Ascending aorta (tissue), 2 donors: ENCODE measurements at regions of chr9 and their contacts with region 1.

Region 1: DNA sequence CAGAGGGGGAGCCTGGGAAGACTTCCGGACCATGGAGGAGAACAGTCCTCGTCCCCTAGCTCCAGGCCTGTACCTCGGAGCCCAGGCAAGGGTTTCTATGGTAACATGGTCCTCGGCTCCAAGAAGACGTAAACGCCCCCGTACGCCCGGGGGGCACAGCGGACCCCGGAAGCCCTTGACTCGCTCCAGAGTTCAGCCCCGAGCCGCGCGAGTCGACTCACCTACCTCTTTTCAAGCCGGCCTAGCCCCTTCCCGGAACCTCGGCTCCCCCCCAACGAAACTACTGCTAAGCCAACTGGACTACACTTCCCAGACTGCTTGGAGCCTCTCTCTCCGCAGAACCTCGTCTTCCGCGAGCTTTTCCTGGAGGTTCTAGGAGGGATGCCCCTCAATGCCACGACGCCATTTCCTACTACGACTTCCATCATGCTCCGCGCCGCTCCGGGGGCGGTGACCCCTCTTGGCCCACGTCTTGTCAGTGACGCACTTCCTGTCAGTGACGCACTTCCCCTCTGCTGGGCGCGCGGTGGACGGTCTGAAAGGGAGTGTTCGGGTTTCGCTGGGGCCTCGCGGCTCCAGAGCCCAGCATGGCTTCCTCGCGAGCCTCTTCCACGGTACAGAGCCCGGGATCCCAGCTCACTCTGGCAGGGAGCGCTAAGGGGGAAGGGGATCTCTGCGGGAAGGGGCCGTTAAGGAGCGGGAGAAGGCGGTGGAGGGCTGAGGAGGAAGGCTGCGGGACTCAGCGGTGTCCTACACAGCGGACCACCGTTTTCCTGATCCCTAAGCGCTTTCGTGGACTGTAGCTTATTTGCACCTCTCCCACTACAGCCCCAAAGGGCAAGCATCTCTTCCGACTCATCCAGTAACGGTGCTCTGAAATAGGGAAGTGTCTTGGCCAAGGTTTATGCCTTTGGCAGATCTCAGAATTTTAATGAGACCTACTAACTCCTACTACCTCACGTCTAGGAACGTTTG is at the starts of genes CDC26 and PRPF4:
- DNase-seq: peak; percentile 89 to 99
- H3K4me3 ChIP-seq: peak within 1 kb of the TSS; percentile 79 to 81
- H3K27ac ChIP-seq: peak within 1 kb of the TSS; percentile 91 to 93
- H3K4me1 ChIP-seq: peaks cover 3 to 15% of the 10 kb centered on the region in 2 donors
- H3K27me3 ChIP-seq: no peaks in the 10 kb centered on the region
- CTCF ChIP-seq: no peak
- total RNA-seq, gene CDC26: 1.2 TPM
- total RNA-seq, gene PRPF4: 5.4 TPM

Region 2: GRCh38 chr9:113221003-113221799 is 54.2 kb before region 1 on chr9 and contains the starts of genes FKBP15 and SLC31A1:
- intact Hi-C with region 1: loop called (anchors 1 kb)
- DNase-seq: peak; percentile 95 to 99
- H3K4me3 ChIP-seq: peak within 1 kb of the TSS; percentile 92 to 99
- H3K27ac ChIP-seq: peak within 1 kb of the TSS; percentile 79 to 85
- H3K4me1 ChIP-seq: peaks cover 10 to 19% of the 10 kb centered on the region in 2 donors
- H3K27me3 ChIP-seq: no peaks in the 10 kb centered on the region
- CTCF ChIP-seq: no peak
- total RNA-seq, gene FKBP15: 24.4 TPM
- total RNA-seq, gene SLC31A1: 3.7 TPM

Region 3: GRCh38 chr9:113401027-113401792 is 125.8 kb after region 1 on chr9 and contains the start of gene ALAD:
- intact Hi-C with region 1: loop called (anchors 1 kb)
- DNase-seq: peak; percentile 95 to 100
- H3K4me3 ChIP-seq: peak within 1 kb of the TSS; percentile 55 to 94
- H3K27ac ChIP-seq: peak within 1 kb of the TSS; percentile 45 to 46
- H3K4me1 ChIP-seq: peaks cover 0 to 10% of the 10 kb centered on the region in 2 donors
- H3K27me3 ChIP-seq: no peaks in the 10 kb centered on the region
- CTCF ChIP-seq: peak; percentile 96
- total RNA-seq, gene ALAD: 71.4 TPM

Region 4: GRCh38 chr9:113591001-113591898 is 315.8 kb after region 1 on chr9:
- intact Hi-C with region 1: loop called (anchors 5 kb)
- DNase-seq: peak in 1 of 2 donors; percentile 91
- H3K4me3 ChIP-seq: no peak overlapping the region
- H3K27ac ChIP-seq: peak overlapping the region; percentile 69 to 80
- H3K4me1 ChIP-seq: peaks cover 10 to 44% of the 10 kb centered on the region in 2 donors
- H3K27me3 ChIP-seq: no peaks in the 10 kb centered on the region
- CTCF ChIP-seq: peak; percentile 84 to 94 (median 92)